Heart left ventricle (tissue), 16 donors: ENCODE measurements at regions of chr10 and their contacts with region 1.

Region 1: GRCh38 chr10:88941026-88941425 is 11.5 kb downstream of the ACTA2 start:
- DNase-seq: no peak
- ATAC-seq: no peak
- H3K4me3 ChIP-seq: no peak overlapping the region
- H3K27ac ChIP-seq: peak overlapping the region in 1 of 12 donors; percentile 78
- H3K4me1 ChIP-seq: peaks cover 0 to 16% (median 0%) of the 10 kb centered on the region in 12 donors
- H3K27me3 ChIP-seq: no peaks in the 10 kb centered on the region
- CTCF ChIP-seq: no peak
- POLR2A ChIP-seq: no peak

Region 2: GRCh38 chr10:88986549-88987242 is 45.7 kb after region 1 on chr10:
- intact Hi-C with region 1: loop called in 2 of 10 experiments (anchors 1 to 2 kb)
- DNase-seq: no peak
- ATAC-seq: no peak
- H3K4me3 ChIP-seq: no peak overlapping the region
- H3K27ac ChIP-seq: peak overlapping the region in 2 of 12 donors; percentile 43 to 95
- H3K4me1 ChIP-seq: peaks cover 0 to 67% (median 20%) of the 10 kb centered on the region in 12 donors
- H3K27me3 ChIP-seq: no peaks in the 10 kb centered on the region
- CTCF ChIP-seq: peak; percentile 74 to 93 (median 84)
- POLR2A ChIP-seq: no peak